GM23248 (cell line): ENCODE measurements at regions of chr22 and their contacts with region 1.

Region 1: GRCh38 chr22:26632422-26633155 is 10.8 kb downstream of the CRYBA4 start:
- DNase-seq: no peak
- H3K4me3 ChIP-seq: no peak overlapping the region
- H3K27ac ChIP-seq: no peak overlapping the region
- H3K4me1 ChIP-seq: no peaks in the 10 kb centered on the region
- H3K27me3 ChIP-seq: 0 out of 2 replicates have a peak, but pooled peaks cover 5% of the 10 kb centered on the region

Region 2: DNA sequence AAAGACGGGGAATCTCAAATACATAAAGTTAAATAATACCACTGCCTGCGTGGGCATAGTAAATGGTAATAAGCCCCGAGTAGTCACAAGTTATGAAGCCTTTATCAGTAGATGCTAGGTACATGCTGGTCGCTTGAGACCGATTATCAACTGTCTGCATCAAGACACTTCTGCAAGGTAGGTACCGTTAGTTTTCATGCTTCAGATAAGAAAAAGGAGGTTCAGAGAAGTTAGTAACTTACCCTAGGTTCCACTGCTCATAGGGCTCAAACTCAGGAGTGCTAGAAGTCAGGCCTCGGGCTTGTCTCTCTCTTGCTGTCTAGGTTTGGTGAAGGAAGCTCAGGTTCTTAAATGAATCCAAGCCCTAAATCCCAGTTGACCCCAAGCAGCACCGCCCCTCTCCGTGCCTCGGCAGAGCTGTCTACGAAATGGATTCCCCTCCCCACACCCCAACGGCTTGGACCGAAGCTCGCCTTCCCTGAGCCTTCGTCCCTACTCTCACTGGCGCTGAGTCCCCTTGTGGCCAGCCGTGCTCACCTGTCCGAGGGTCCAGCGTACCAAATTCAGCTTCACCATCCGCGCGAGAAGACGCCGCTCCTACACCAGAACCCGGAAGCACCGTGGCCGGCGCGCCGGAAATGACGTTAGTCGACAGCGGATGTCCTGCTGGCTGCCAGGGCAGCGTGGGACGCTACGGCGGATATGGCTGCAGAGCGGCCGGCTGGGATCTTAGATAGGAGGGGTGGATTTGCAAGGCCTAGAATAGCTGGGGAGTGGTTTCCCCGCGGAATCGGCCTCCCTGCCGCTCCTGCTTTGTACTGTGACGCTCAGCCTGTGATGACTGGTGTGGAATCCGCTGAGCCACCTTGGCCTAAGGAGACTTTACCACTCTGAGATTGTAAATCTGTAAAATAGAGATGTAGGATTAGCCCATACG is 120.5 kb before region 1 on chr22 and contains the start of gene TFIP11:
- in situ Hi-C with region 1: loop called (anchors 10 kb)
- DNase-seq: peak; percentile 97
- H3K4me3 ChIP-seq: peak within 1 kb of the TSS; percentile 96
- H3K27ac ChIP-seq: peak within 1 kb of the TSS; percentile 58
- H3K4me1 ChIP-seq: peaks cover 16% of the 10 kb centered on the region
- H3K27me3 ChIP-seq: no peaks in the 10 kb centered on the region
- total RNA-seq, gene TFIP11: 30.1 and 41.9 TPM in 2 replicates

Region 3: GRCh38 chr22:27329131-27329850 is 696.7 kb after region 1 on chr22:
- in situ Hi-C with region 1: no loop called
- DNase-seq: no peak
- H3K4me3 ChIP-seq: no peak overlapping the region
- H3K27ac ChIP-seq: no peak overlapping the region
- H3K4me1 ChIP-seq: 0 out of 2 replicates have a peak, but pooled peaks cover 8% of the 10 kb centered on the region
- H3K27me3 ChIP-seq: 0 out of 2 replicates have a peak, but pooled peaks cover 3% of the 10 kb centered on the region